GM10248 (cell line): ENCODE measurements at regions of chr16 and their contacts with region 1.

Region 1: DNA sequence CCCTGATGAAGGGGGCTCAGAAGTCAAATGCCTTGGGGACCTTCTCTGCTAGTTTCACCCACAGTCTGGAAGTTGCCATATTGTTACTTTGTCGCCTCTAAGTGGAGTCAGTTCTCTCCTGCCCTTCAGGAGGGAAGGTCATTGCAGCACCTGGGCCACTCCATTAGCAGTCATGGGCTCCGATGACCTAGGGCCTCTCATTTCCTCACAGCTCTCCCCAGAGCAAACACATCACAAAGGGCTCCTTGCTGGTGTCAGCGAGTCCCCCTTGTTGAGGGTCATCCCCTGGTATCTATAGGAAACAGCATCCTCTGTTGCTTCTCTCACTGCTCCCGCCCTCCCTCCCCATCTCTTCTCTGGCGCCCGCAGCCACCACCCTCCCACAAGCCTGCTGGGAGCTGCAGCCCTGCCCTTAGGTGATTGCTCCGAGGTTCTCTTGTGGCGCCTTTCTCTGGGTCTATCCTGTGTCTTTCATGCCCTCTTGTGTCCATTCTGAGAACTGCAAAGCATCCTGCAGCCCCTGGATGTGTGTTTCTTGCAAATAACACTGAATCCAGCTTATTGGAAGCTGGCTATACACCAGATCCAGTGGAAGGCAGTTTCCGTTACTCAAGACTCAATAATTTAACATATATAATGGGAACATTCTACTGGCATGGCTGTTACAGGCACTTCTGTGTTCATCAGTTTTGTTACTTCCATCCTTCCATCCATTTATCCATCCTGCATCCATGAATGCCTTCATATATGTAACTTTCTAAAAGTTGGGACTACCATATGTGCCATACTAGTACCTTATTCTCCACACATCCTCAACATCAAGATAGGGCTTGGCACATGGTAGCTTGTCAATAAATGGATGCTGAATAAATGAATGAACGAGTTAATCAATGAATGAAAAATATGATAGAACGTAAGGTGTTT is 21.2 kb downstream of the PDILT start:
- DNase-seq: peak; percentile 64
- CTCF ChIP-seq: peak; percentile 77

Region 2: GRCh38 chr16:19898924-19899604 is 484.3 kb before region 1 on chr16:
- CTCF ChIA-PET with region 1: interaction called, 55 read pairs
- POLR2A ChIA-PET with region 1: no interaction called
- DNase-seq: peak; percentile 67
- CTCF ChIP-seq: peak; percentile 68

Region 3: GRCh38 chr16:19907161-19907992 is 476.0 kb before region 1 on chr16:
- CTCF ChIA-PET with region 1: interaction called, 103 read pairs
- POLR2A ChIA-PET with region 1: no interaction called
- DNase-seq: peak; percentile 76
- CTCF ChIP-seq: peak; percentile 92

Region 4: GRCh38 chr16:20359997-20360396 is 23.4 kb before region 1 on chr16:
- CTCF ChIA-PET with region 1: interaction called, 29 read pairs
- POLR2A ChIA-PET with region 1: no interaction called
- DNase-seq: no peak
- CTCF ChIP-seq: peak; percentile 7

Region 5: GRCh38 chr16:20372701-20373100 is 10.7 kb before region 1 on chr16:
- CTCF ChIA-PET with region 1: interaction called, 56 read pairs
- POLR2A ChIA-PET with region 1: no interaction called
- DNase-seq: no peak
- CTCF ChIP-seq: no peak

Region 6: GRCh38 chr16:20393801-20394577 is 10.6 kb after region 1 on chr16:
- CTCF ChIA-PET with region 1: interaction called, 56 read pairs
- POLR2A ChIA-PET with region 1: no interaction called
- DNase-seq: no peak
- CTCF ChIP-seq: no peak

Region 7: DNA sequence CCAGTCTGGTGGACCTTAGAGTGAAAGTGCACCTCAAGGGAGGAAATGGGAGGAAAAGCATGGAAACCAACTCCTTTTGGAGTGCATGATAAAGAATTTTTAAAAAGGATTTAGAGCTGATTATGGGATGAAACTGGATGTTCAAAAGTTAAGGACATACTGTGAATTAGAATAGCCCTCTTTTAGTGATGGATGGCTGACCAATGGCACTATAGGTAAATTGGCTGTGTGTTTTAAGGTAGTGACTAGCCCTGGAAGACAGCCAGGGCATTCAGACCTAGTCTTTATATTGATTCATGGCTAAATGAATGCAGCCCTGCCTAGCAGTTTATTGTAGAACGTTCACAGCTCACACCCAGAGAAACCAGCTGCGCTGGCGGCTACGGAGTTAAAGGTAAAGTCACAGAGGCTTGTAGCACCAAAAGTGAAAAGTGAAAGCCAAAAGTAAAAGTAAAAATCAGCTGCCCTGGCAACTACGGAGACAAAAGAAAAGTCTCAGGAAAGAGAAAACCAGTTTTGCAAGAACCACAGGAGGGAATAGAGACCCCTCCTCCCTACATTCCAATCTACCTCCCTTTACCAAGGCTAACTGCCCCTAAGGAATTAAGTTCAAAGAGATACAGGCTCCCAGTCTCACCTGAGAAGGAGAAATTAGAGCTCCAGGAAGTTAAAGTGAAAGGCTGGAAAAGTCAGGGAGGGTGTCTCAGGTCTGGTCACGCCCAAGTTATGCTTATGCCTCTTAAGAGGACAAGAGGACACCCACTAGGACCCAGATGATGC is 292.3 kb after region 1 on chr16:
- CTCF ChIA-PET with region 1: no interaction called
- POLR2A ChIA-PET with region 1: no interaction called
- DNase-seq: peak; percentile 38
- CTCF ChIP-seq: no peak